Caco-2 (cell line): ENCODE measurements at regions of chr4 and their contacts with region 1.

Region 1: GRCh38 chr4:176054942-176055341 is 10.7 kb upstream of the WDR17 start:
- DNase-seq: no peak
- H3K4me3 ChIP-seq: no peak overlapping the region
- H3K4me3 Mint-ChIP-seq: no peak overlapping the region
- H3K27ac Mint-ChIP-seq: no peak overlapping the region
- H3K4me1 ChIP-seq: no peaks in the 10 kb centered on the region
- H3K4me1 Mint-ChIP-seq: no peaks in the 10 kb centered on the region
- H3K27me3 ChIP-seq: no peaks in the 10 kb centered on the region
- H3K27me3 Mint-ChIP-seq: no peaks in the 10 kb centered on the region
- CTCF ChIP-seq: no peak

Region 2: GRCh38 chr4:175947117-175947722 is 107.7 kb before region 1 on chr4:
- CTCF ChIA-PET with region 1: no interaction called
- POLR2A ChIA-PET with region 1: no interaction called
- intact Hi-C with region 1: loop called (anchors 5 kb)
- DNase-seq: no peak
- H3K4me3 ChIP-seq: no peak overlapping the region
- H3K4me3 Mint-ChIP-seq: no peak overlapping the region
- H3K27ac Mint-ChIP-seq: no peak overlapping the region
- H3K4me1 ChIP-seq: 0 out of 2 replicates have a peak, but pooled peaks cover 5% of the 10 kb centered on the region
- H3K4me1 Mint-ChIP-seq: no peaks in the 10 kb centered on the region
- H3K27me3 ChIP-seq: no peaks in the 10 kb centered on the region
- H3K27me3 Mint-ChIP-seq: peaks cover 2% of the 10 kb centered on the region
- CTCF ChIP-seq: peak; percentile 51 to 56